Endothelial cell of umbilical vein (primary cell): ENCODE measurements at regions of chr20 and their contacts with region 1.

Region 1: DNA sequence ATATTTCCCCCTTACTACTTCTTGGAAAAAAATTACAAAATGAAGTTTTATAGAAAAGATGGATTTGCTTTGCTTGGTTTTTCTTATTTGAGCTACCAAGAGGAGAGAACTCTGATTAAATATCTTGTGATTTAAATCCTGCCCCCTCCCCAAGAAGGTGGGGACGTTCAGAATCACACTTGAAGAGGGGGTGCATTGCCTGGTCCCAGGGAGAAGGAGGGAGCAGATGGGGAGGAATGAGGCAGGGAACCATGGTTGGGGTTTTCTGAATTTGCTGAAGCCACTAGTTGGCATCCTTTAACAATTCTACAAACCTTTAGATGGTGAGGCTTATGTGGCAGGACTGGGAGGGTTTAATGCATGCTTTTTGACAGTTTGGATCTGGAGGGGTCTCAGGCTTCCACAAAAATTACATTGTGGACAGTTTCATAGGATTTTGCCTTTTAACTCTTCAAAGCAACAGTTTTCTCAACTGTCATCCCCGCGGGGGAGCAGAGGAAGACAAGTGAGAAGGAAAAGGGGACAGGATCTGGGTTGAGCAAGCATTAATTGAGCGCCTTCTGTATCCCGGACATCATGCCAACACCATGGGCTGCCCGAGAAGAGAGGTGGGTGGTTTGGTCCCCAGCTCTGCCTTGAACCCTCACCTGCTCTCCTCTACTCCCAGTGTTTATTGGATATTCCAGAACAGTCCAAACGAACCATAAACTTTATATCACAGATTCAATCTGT is 5.7 kb downstream of the PCK1 start:
- DNase-seq: no peak
- H3K4me3 ChIP-seq: no peak overlapping the region
- H3K27ac ChIP-seq: no peak overlapping the region
- H3K4me1 ChIP-seq: no peaks in the 10 kb centered on the region
- H3K27me3 ChIP-seq: no peaks in the 10 kb centered on the region
- CTCF ChIP-seq: no peak
- POLR2A ChIP-seq: no peak

Region 2: GRCh38 chr20:57582432-57583305 is 16.1 kb after region 1 on chr20:
- CTCF ChIA-PET with region 1: interaction called, 3 read pairs
- POLR2A ChIA-PET with region 1: no interaction called
- dilution Hi-C with region 1: no loop called
- intact Hi-C with region 1: loop called (anchors 1 kb)
- DNase-seq: peak; percentile 86
- H3K4me3 ChIP-seq: no peak overlapping the region
- H3K27ac ChIP-seq: no peak overlapping the region
- H3K4me1 ChIP-seq: no peaks in the 10 kb centered on the region
- H3K27me3 ChIP-seq: peaks cover 4 to 7% of the 10 kb centered on the region in 2 experiments
- CTCF ChIP-seq: peak; percentile 26 to 60
- POLR2A ChIP-seq: no peak

Region 3: GRCh38 chr20:57609861-57610205 is 43.3 kb after region 1 on chr20:
- CTCF ChIA-PET with region 1: no interaction called
- POLR2A ChIA-PET with region 1: no interaction called
- dilution Hi-C with region 1: no loop called
- intact Hi-C with region 1: no loop called
- DNase-seq: no peak
- H3K4me3 ChIP-seq: no peak overlapping the region
- H3K27ac ChIP-seq: no peak overlapping the region
- H3K4me1 ChIP-seq: no peaks in the 10 kb centered on the region
- H3K27me3 ChIP-seq: no peaks in the 10 kb centered on the region
- CTCF ChIP-seq: peak in 1 of 2 donors; percentile 16
- POLR2A ChIP-seq: no peak